ENCODE measurements at regions of chr7 and their contacts with region 1.

Region 1: DNA sequence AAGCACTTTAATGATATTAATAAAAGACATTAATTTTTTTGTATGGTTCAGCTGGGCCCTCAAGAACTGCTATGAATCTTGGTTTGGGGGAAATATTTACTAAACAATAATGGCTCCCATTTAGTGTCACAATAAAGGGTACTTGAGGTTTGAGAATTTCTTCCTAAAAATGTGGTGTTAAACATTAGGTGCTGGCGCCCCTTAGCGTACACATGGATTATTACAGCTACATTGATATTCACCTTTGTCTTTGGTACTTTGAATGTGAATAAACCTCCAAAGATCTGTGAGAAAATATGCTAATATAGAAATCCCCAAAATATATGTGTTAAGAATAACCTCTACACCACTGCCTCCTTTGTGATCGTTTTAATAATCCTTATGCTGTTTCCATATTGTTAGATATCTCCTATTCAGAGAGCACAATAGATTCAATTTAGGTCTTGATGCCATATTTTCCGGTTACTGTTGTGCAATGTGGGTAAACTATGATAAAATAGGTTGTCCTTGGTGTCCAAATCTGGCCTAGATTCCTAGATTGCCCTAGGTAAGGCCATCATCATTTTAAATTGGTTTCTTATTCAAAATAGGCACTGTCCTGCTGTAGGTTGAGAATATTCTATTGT is 161.8 kb upstream of the CACNA2D1 start:
- DNase-seq: peak in 2 of 3 donors; percentile 15 to 39
- ATAC-seq: no peak
- H3K4me3 ChIP-seq: no peak overlapping the region
- H3K27ac ChIP-seq: no peak overlapping the region
- H3K4me1 ChIP-seq: no peaks in the 10 kb centered on the region
- H3K27me3 ChIP-seq: no peaks in the 10 kb centered on the region

Region 2: GRCh38 chr7:82044497-82045080 is 560.8 kb before region 1 on chr7:
- intact Hi-C with region 1: loop called in 2 of 4 experiments (anchors 10 kb)
- DNase-seq: peak; percentile 10 to 51 (median 14)
- ATAC-seq: peak; percentile 24 to 41
- H3K4me3 ChIP-seq: no peak overlapping the region
- H3K27ac ChIP-seq: no peak overlapping the region
- H3K4me1 ChIP-seq: no peaks in the 10 kb centered on the region
- H3K27me3 ChIP-seq: no peaks in the 10 kb centered on the region

Region 3: GRCh38 chr7:83267141-83267631 is 661.8 kb after region 1 on chr7:
- intact Hi-C with region 1: no loop called
- DNase-seq: no peak
- ATAC-seq: no peak
- H3K4me3 ChIP-seq: no peak overlapping the region
- H3K27ac ChIP-seq: no peak overlapping the region
- H3K4me1 ChIP-seq: no peaks in the 10 kb centered on the region
- H3K27me3 ChIP-seq: no peaks in the 10 kb centered on the region

Measured in right cardiac atrium (tissue), 5 donors.